Heart left ventricle (tissue), 16 donors: ENCODE measurements at regions of chr10 and their contacts with region 1.

Region 1: DNA sequence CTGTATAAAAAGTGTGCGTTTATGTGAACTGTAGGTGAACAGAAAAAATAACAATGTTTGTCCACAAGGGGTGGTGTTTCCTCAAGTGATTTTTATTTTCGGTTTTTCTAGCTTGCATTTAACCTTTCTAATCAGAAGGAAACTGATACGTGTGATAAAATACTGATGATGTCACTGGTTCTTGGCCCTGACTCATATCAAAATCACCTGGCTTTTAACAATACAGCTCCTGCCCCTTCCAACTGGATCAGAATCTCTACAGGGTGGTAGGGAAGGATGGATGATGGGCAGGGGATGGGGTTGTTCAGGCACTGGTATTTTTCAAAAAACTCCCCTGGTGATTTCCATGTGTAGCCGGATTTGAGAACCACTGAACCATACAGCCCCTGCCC is 10.9 kb downstream of the NPFFR1 start:
- DNase-seq: no peak
- ATAC-seq: peak in 2 of 4 donors; percentile 16 to 45
- H3K4me3 ChIP-seq: no peak overlapping the region
- H3K27ac ChIP-seq: no peak overlapping the region
- H3K4me1 ChIP-seq: peaks cover 0 to 16% (median 5%) of the 10 kb centered on the region in 12 donors
- H3K27me3 ChIP-seq: no peaks in the 10 kb centered on the region
- CTCF ChIP-seq: peak; percentile 29 to 64 (median 54)
- POLR2A ChIP-seq: no peak

Region 2: GRCh38 chr10:70227548-70228320 is 45.2 kb before region 1 on chr10:
- intact Hi-C with region 1: loop called in 2 of 10 experiments (anchors 5 to 10 kb)
- DNase-seq: no peak
- ATAC-seq: peak in 3 of 4 donors; percentile 42 to 60 (median 48)
- H3K4me3 ChIP-seq: no peak overlapping the region
- H3K27ac ChIP-seq: peak overlapping the region in 6 of 12 donors; percentile 1 to 34 (median 28)
- H3K4me1 ChIP-seq: peaks cover 0 to 55% (median 23%) of the 10 kb centered on the region in 12 donors
- H3K27me3 ChIP-seq: no peaks in the 10 kb centered on the region
- CTCF ChIP-seq: no peak
- POLR2A ChIP-seq: no peak

Region 3: DNA sequence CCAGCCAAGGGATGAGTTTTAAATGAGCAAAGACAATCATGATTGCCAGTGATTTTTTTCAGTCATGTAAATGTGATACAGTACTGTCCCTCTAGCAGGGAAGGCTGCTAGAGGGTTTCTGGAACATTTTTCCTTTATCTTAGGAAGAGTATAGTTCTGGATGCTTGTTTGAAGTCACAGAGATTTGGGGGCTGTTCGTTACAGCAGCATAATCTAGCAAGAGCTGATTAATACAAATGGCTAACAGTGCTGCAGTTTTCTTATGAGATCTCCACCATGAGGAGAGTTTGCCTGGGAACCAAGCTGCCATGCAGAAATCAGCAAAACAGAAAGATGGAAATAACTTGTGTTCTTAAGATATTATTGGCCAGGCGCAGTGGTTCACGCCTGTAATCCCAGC is 31.8 kb before region 1 on chr10:
- intact Hi-C with region 1: no loop called
- DNase-seq: no peak
- ATAC-seq: no peak
- H3K4me3 ChIP-seq: no peak overlapping the region
- H3K27ac ChIP-seq: no peak overlapping the region
- H3K4me1 ChIP-seq: no peaks in the 10 kb centered on the region
- H3K27me3 ChIP-seq: no peaks in the 10 kb centered on the region
- CTCF ChIP-seq: no peak
- POLR2A ChIP-seq: no peak

Region 4: GRCh38 chr10:70324339-70324861 is 51.5 kb after region 1 on chr10:
- intact Hi-C with region 1: loop called in 1 of 10 experiments (anchors 10 kb)
- DNase-seq: peak in 3 of 5 donors; percentile 50 to 72 (median 52)
- ATAC-seq: peak; percentile 48 to 76 (median 56)
- H3K4me3 ChIP-seq: no peak overlapping the region
- H3K27ac ChIP-seq: peak overlapping the region in 11 of 12 donors; percentile 17 to 80 (median 39)
- H3K4me1 ChIP-seq: peaks cover 0 to 52% (median 22%) of the 10 kb centered on the region in 12 donors
- H3K27me3 ChIP-seq: peaks cover 0 to 13% (median 0%) of the 10 kb centered on the region in 9 donors
- CTCF ChIP-seq: no peak
- POLR2A ChIP-seq: no peak

Region 5: GRCh38 chr10:70348228-70348850 is 75.4 kb after region 1 on chr10:
- intact Hi-C with region 1: loop called in 2 of 10 experiments (anchors 5 to 10 kb)
- DNase-seq: peak in 1 of 5 donors; percentile 29
- ATAC-seq: peak in 3 of 4 donors; percentile 40 to 68 (median 67)
- H3K4me3 ChIP-seq: no peak overlapping the region
- H3K27ac ChIP-seq: no peak overlapping the region
- H3K4me1 ChIP-seq: peaks cover 0 to 23% (median 10%) of the 10 kb centered on the region in 12 donors
- H3K27me3 ChIP-seq: no peaks in the 10 kb centered on the region
- CTCF ChIP-seq: peak; percentile 29 to 65 (median 50)
- POLR2A ChIP-seq: no peak